ENCODE measurements at regions of chr7 and their contacts with region 1.

Region 1: GRCh38 chr7:128692623-128693270 is 20.7 kb downstream of the GARIN1A start:
- DNase-seq: no peak
- H3K4me3 ChIP-seq: no peak overlapping the region
- H3K27ac ChIP-seq: no peak overlapping the region
- H3K4me1 ChIP-seq: no peaks in the 10 kb centered on the region
- CTCF ChIP-seq: no peak

Region 2: GRCh38 chr7:129896568-129897382 is 1204.0 kb after region 1 on chr7:
- CTCF ChIA-PET with region 1: interaction called, 10 read pairs
- POLR2A ChIA-PET with region 1: no interaction called
- intact Hi-C with region 1: no loop called
- DNase-seq: no peak
- H3K4me3 ChIP-seq: no peak overlapping the region
- H3K27ac ChIP-seq: no peak overlapping the region
- H3K4me1 ChIP-seq: no peaks in the 10 kb centered on the region
- CTCF ChIP-seq: no peak

Measured in OCI-LY7 (cell line).